ENCODE measurements at regions of chr6 and their contacts with region 1.

Region 1: DNA sequence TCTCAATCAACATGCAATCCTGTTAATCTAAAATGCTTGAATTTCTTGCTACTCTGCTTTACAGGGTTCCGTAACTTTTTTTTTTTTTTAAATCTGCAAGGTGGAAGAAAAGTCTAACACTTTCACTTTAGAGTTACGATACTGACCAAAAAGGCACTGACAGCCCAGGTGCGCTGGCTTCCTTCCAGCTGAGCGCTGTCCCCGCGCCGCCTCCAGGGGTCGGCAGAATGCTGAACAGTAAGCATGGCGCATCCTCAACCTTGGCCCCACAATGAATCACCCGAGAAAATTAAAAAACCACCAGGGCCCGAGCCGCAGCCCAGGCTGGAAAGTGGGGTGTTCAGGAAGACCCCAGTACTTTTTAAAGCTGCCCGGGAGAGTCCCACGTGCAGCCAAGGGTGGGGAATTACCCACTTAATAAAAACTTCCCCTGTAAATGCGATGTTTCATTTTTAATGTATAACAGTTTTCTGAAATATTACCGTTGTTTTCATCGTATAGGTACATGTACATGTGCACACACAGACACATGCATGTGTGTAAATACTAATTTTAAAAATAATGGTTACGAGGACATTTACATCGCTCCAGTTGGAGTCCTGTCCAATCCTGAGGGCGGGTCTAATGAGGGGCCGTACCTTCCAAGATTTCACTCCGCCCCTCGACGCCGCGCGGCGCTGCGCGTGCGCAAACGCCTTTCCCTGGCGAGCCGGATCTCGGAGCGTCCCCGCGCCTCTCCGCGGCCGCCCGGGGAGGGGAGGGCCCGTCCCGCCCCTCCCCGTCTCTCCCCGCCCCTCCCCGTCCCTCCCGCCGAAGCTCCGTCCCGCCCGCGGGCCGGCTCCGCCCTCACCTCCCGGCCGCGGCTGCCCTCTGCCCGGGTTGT is at the start of gene GINM1:
- DNase-seq: peak; percentile 100
- H3K4me3 Mint-ChIP-seq: peak within 1 kb of the TSS; percentile 94
- H3K27ac Mint-ChIP-seq: peak within 1 kb of the TSS; percentile 91
- H3K4me1 Mint-ChIP-seq: peaks cover 11% of the 10 kb centered on the region
- H3K27me3 Mint-ChIP-seq: peaks cover 4% of the 10 kb centered on the region
- total RNA-seq, gene GINM1: 18.0 and 19.9 TPM in 2 replicates

Region 2: GRCh38 chr6:149306967-149307366 is 258.8 kb before region 1 on chr6:
- intact Hi-C with region 1: no loop called
- DNase-seq: no peak
- H3K4me3 Mint-ChIP-seq: no peak overlapping the region
- H3K27ac Mint-ChIP-seq: no peak overlapping the region
- H3K4me1 Mint-ChIP-seq: peaks cover 12% of the 10 kb centered on the region
- H3K27me3 Mint-ChIP-seq: no peaks in the 10 kb centered on the region

Region 3: GRCh38 chr6:149484733-149485700 is 80.8 kb before region 1 on chr6 and contains the start of gene ZC3H12D:
- intact Hi-C with region 1: loop called (anchors 2 kb)
- DNase-seq: peak; percentile 94
- H3K4me3 Mint-ChIP-seq: peak within 1 kb of the TSS; percentile 90
- H3K27ac Mint-ChIP-seq: peak within 1 kb of the TSS; percentile 100
- H3K4me1 Mint-ChIP-seq: peaks cover 60% of the 10 kb centered on the region
- H3K27me3 Mint-ChIP-seq: no peaks in the 10 kb centered on the region
- total RNA-seq, gene ZC3H12D: 79.6 and 79.8 TPM in 2 replicates

Region 4: GRCh38 chr6:149648148-149649145 is 82.7 kb after region 1 on chr6 and contains the start of gene KATNA1:
- intact Hi-C with region 1: loop called (anchors 2 kb)
- DNase-seq: peak; percentile 97
- H3K4me3 Mint-ChIP-seq: peak within 1 kb of the TSS; percentile 85
- H3K27ac Mint-ChIP-seq: peak within 1 kb of the TSS; percentile 87
- H3K4me1 Mint-ChIP-seq: peaks cover 23% of the 10 kb centered on the region
- H3K27me3 Mint-ChIP-seq: no peaks in the 10 kb centered on the region
- total RNA-seq, gene KATNA1: 18.9 and 23.0 TPM in 2 replicates

Region 5: GRCh38 chr6:149746147-149746946 is 180.6 kb after region 1 on chr6 and contains the start of gene NUP43:
- intact Hi-C with region 1: loop called (anchors 1 kb)
- DNase-seq: peak; percentile 98
- H3K4me3 Mint-ChIP-seq: peak within 1 kb of the TSS; percentile 99
- H3K27ac Mint-ChIP-seq: peak within 1 kb of the TSS; percentile 94
- H3K4me1 Mint-ChIP-seq: peaks cover 20% of the 10 kb centered on the region
- H3K27me3 Mint-ChIP-seq: no peaks in the 10 kb centered on the region
- total RNA-seq, gene NUP43: 78.9 and 93.7 TPM in 2 replicates

Region 6: DNA sequence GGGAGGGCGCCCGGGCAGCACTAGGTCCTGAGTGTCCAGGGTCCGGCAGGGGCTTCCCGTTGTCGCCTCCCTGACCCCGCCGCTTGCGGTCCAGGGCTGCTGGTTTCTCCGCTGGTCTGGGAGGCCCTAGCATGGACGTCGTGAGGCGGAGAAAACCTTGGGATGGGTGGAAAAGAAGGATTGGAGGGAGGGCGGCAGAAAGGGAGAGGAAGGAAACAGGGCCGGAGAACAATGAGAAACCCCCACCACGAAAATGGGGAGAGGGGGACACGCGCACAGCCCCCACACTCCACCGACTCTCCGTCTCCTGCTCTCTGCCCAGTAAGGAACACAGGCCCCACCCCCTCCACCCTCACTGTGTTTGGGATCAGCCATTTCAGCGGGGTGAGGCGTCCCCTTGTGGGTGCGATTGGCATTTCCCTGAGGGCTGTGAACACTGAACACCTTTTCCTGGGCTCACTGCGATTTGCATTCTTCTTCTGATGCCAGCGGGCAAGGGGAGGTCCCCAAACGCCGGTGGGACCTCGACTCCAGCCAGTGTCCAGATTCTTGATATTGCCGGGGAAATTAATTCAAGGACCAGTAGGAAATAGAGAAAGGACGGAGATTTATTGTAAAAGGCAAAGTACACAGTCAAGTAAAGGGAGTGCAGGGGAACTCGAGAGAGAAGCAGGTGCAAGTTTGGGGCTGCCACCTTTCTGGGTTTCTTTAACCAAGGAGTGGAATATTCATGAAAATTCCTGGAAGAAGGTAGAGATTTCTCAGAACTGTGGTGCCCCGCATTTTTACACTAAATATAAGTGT is 360.4 kb after region 1 on chr6:
- intact Hi-C with region 1: loop called (anchors 5 kb)
- DNase-seq: peak; percentile 94
- H3K4me3 Mint-ChIP-seq: peak overlapping the region; percentile 76
- H3K27ac Mint-ChIP-seq: no peak overlapping the region
- H3K4me1 Mint-ChIP-seq: peaks cover 20% of the 10 kb centered on the region
- H3K27me3 Mint-ChIP-seq: peaks cover 87% of the 10 kb centered on the region